ENCODE measurements at regions of chr4 and their contacts with region 1.

Region 1: GRCh38 chr4:16733509-16733908 is 164.9 kb downstream of the LDB2 start:
- DNase-seq: no peak
- ATAC-seq: no peak
- H3K4me3 ChIP-seq: no peak overlapping the region
- H3K27ac ChIP-seq: no peak overlapping the region
- H3K4me1 ChIP-seq: peaks cover 0 to 26% (median 3%) of the 10 kb centered on the region in 9 donors
- H3K27me3 ChIP-seq: no peaks in the 10 kb centered on the region
- CTCF ChIP-seq: no peak

Region 2: GRCh38 chr4:16496501-16496900 is 237.0 kb before region 1 on chr4:
- intact Hi-C with region 1: no loop called
- DNase-seq: no peak
- ATAC-seq: no peak
- H3K4me3 ChIP-seq: no peak overlapping the region
- H3K27ac ChIP-seq: no peak overlapping the region
- H3K4me1 ChIP-seq: no peaks in the 10 kb centered on the region
- H3K27me3 ChIP-seq: no peaks in the 10 kb centered on the region
- CTCF ChIP-seq: no peak

Region 3: GRCh38 chr4:16516796-16517439 is 216.6 kb before region 1 on chr4:
- intact Hi-C with region 1: loop called in 1 of 10 experiments (anchors 10 kb)
- DNase-seq: peak in 1 of 2 donors; percentile 41
- ATAC-seq: peak in 4 of 8 donors; percentile 42 to 72 (median 59)
- H3K4me3 ChIP-seq: no peak overlapping the region
- H3K27ac ChIP-seq: peak overlapping the region in 1 of 10 donors; percentile 33
- H3K4me1 ChIP-seq: peaks cover 0 to 29% (median 14%) of the 10 kb centered on the region in 9 donors
- H3K27me3 ChIP-seq: no peaks in the 10 kb centered on the region
- CTCF ChIP-seq: peak in 6 of 9 donors; percentile 29 to 54 (median 40)

Region 4: DNA sequence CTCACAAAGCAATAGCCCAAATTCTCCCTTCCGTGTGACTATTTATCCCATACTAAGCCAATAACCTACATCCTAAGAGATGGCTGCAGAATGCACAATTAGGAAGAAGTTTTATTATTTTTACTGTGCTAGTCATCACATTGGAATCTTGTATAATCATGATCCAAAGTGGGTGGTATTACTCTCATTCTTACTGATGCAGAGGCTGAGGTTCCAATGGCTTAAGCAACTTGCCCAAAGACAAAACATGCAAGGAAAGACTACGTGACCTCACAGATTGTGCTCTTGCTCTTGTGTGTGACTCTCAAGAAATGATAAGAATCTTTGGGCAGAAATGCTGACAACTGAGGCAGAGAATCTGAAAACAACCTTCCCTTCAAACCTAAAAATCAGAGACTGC is 47.3 kb before region 1 on chr4:
- intact Hi-C with region 1: loop called in 1 of 10 experiments (anchors 10 kb)
- DNase-seq: no peak
- ATAC-seq: peak in 3 of 8 donors; percentile 27 to 52 (median 38)
- H3K4me3 ChIP-seq: no peak overlapping the region
- H3K27ac ChIP-seq: peak overlapping the region in 1 of 10 donors; percentile 30
- H3K4me1 ChIP-seq: peaks cover 0 to 40% (median 8%) of the 10 kb centered on the region in 9 donors
- H3K27me3 ChIP-seq: no peaks in the 10 kb centered on the region
- CTCF ChIP-seq: no peak

Measured in heart right ventricle (tissue), 16 donors.